ENCODE measurements at regions of chr6 and their contacts with region 1.

Region 1: GRCh38 chr6:127266178-127266891 is at the start of gene RNF146:
- DNase-seq: peak; percentile 83 to 89
- H3K4me3 ChIP-seq: peak within 1 kb of the TSS; percentile 91 to 97
- H3K27ac ChIP-seq: peak within 1 kb of the TSS; percentile 100
- H3K4me1 ChIP-seq: peaks cover 0 to 32% (median 7%) of the 10 kb centered on the region in 4 donors
- H3K27me3 ChIP-seq: no peaks in the 10 kb centered on the region
- CTCF ChIP-seq: peak; percentile 69 to 74

Region 2: GRCh38 chr6:126118058-126118755 is 1148.1 kb before region 1 on chr6:
- intact Hi-C with region 1: no loop called
- DNase-seq: no peak
- H3K4me3 ChIP-seq: no peak overlapping the region
- H3K27ac ChIP-seq: no peak overlapping the region
- H3K4me1 ChIP-seq: no peaks in the 10 kb centered on the region
- H3K27me3 ChIP-seq: no peaks in the 10 kb centered on the region
- CTCF ChIP-seq: no peak

Region 3: GRCh38 chr6:126811321-126811720 is 455.0 kb before region 1 on chr6:
- intact Hi-C with region 1: loop called (anchors 10 kb)
- DNase-seq: peak in 1 of 2 donors; percentile 33
- H3K4me3 ChIP-seq: no peak overlapping the region
- H3K27ac ChIP-seq: no peak overlapping the region
- H3K4me1 ChIP-seq: peaks cover 0 to 24% (median 5%) of the 10 kb centered on the region in 4 donors
- H3K27me3 ChIP-seq: no peaks in the 10 kb centered on the region
- CTCF ChIP-seq: no peak

Region 4: GRCh38 chr6:126831461-126831860 is 434.9 kb before region 1 on chr6:
- intact Hi-C with region 1: no loop called
- DNase-seq: no peak
- H3K4me3 ChIP-seq: no peak overlapping the region
- H3K27ac ChIP-seq: no peak overlapping the region
- H3K4me1 ChIP-seq: no peaks in the 10 kb centered on the region
- H3K27me3 ChIP-seq: no peaks in the 10 kb centered on the region
- CTCF ChIP-seq: no peak

Region 5: GRCh38 chr6:127300411-127300810 is 34.1 kb after region 1 on chr6:
- intact Hi-C with region 1: no loop called
- DNase-seq: no peak
- H3K4me3 ChIP-seq: no peak overlapping the region
- H3K27ac ChIP-seq: no peak overlapping the region
- H3K4me1 ChIP-seq: peaks cover 0 to 22% (median 6%) of the 10 kb centered on the region in 4 donors
- H3K27me3 ChIP-seq: no peaks in the 10 kb centered on the region
- CTCF ChIP-seq: no peak